ENCODE measurements at regions of chr2 and their contacts with region 1.

Region 1: DNA sequence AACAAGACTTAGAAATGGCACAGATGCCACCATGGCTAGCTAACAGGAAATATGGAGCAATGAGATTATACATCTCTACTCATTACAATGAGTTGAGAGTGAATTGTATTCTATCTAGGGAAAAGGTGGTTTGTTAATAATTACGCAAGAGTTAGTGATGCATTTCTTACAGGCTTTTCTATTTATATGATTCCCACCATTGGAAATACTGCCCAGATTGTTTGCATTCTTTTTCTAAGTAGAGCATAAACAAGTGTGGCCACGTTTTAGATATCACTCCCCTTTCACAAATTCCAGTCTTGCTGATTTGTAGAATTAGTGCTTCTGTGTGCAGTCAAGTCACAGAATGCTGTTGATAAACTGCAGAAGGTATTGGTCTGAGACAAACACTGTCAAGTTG is 56.6 kb downstream of the ZNF804A start:
- DNase-seq: no peak
- ATAC-seq: no peak

Region 2: DNA sequence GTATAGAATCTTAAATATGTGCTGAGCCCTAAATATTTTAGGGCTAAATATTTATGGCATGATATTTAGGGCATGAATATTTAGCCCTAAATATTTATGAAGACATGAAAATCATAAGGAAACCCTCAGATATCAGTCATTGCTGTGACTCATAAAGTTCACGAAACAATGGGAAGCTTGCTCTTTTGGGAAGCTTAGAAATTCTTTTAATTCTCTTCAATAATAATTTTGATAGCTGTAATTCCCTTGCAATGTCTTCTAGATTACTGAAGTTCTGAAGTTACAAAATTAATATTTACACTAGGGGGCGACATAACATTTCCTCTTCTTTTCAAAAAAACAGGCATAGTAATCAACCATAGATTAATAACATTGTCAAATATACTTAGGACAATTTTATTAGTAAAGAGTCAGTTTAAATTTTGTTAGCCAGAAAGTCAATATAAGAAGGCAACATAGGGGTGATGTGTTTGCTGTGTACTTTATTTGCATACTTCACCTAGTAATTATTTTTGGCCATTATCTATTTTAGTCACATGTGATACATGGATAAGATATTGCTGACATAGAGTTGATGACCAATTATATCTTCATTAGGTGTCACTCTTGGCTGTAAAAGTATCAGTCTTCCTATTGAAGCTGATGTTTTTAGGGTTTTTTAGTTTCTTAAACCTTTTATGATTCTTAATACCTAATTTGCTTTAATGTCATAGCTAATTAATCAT is 43.4 kb before region 1 on chr2:
- intact Hi-C with region 1: loop called (anchors 2 kb)
- DNase-seq: no peak
- ATAC-seq: no peak